GM12878 (cell line): ENCODE measurements at regions of chr3 and their contacts with region 1.

Region 1: GRCh38 chr3:119257682-119258410 is 17.2 kb upstream of the B4GALT4 start:
- DNase-seq: no peak
- ATAC-seq: peak; percentile 92
- H3K4me3 ChIP-seq: no peak overlapping the region
- H3K27ac ChIP-seq: no peak overlapping the region
- H3K4me1 ChIP-seq: peaks cover 10% of the 10 kb centered on the region; the same call in 1 of the 2 replicates
- H3K27me3 ChIP-seq: no peaks in the 10 kb centered on the region
- CTCF ChIP-seq: no peak
- EP300 ChIP-seq: no peak
- POLR2A ChIP-seq: no peak
- RAD21 ChIP-seq: no peak

Region 2: DNA sequence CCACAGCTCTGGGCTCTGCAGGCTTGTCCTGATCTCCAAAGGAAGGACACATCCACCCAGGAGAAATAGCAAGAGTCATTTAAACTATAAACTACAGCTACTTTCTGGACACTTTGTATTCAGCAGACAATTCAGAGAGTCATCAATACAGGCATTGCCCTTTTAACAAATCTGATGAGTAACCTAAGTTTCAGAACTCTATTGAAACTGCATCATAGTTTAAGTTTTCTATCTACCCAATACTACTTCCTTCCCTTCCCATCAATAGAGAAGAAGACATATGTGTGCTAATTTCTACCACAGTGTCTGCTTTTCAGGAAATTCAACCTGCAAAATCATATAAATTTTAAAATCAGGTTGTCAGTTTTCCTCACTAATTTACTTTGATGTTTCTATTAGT is 959.7 kb before region 1 on chr3:
- CTCF ChIA-PET with region 1: no interaction called
- POLR2A ChIA-PET with region 1: interaction called, 11 read pairs
- RAD21 ChIA-PET with region 1: no interaction called
- SMC1A ChIA-PET with region 1: no interaction called
- in situ Hi-C with region 1: no loop called
- intact Hi-C with region 1: no loop called
- DNase-seq: no peak
- ATAC-seq: peak; percentile 78
- H3K4me3 ChIP-seq: no peak overlapping the region
- H3K27ac ChIP-seq: no peak overlapping the region
- H3K4me1 ChIP-seq: no peaks in the 10 kb centered on the region
- H3K27me3 ChIP-seq: no peaks in the 10 kb centered on the region
- CTCF ChIP-seq: no peak
- EP300 ChIP-seq: no peak
- POLR2A ChIP-seq: no peak
- RAD21 ChIP-seq: no peak

Region 3: DNA sequence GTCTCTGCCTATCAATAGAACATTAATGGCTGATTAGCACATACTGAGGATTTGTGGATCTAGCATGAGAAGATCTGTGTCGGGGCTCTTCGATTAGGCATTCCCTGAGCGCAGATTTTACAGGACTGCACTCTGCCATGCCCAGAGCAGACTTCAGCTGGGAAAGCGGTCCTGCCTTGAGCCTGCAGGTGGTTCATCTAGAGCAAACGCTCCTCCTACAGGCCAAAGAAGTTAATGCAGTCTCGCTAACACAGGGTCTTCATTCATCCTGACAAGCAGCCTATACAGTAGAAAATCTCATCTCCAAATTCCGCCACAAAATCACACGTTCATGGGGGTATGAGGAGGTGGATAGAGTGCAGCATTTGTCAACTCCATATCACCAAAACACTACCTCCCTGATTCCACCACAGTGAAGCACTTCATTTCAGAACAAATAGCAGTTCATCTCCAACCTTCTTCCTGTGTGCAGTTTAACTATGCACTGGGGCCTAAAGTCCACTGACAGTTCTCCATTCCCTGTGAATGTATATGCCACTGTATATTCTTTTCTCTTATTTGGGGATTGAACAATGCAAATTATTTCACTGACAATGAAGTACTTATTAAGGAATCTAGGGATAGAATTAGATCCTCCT is 629.0 kb before region 1 on chr3:
- CTCF ChIA-PET with region 1: no interaction called
- POLR2A ChIA-PET with region 1: no interaction called
- RAD21 ChIA-PET with region 1: no interaction called
- SMC1A ChIA-PET with region 1: no interaction called
- in situ Hi-C with region 1: no loop called
- intact Hi-C with region 1: no loop called
- DNase-seq: peak; percentile 43
- ATAC-seq: peak; percentile 95
- H3K4me3 ChIP-seq: no peak overlapping the region
- H3K27ac ChIP-seq: no peak overlapping the region
- H3K4me1 ChIP-seq: no peaks in the 10 kb centered on the region
- H3K27me3 ChIP-seq: no peaks in the 10 kb centered on the region
- CTCF ChIP-seq: peak; percentile 85 to 94 (median 86)
- EP300 ChIP-seq: no peak
- POLR2A ChIP-seq: no peak
- RAD21 ChIP-seq: peak; percentile 89